Activated CD4-positive, alpha-beta memory T cell treated with anti-CD3 and anti-CD28 coated beads for 36 hours (primary cell): ENCODE measurements at regions of chr10 and their contacts with region 1.

Region 1: DNA sequence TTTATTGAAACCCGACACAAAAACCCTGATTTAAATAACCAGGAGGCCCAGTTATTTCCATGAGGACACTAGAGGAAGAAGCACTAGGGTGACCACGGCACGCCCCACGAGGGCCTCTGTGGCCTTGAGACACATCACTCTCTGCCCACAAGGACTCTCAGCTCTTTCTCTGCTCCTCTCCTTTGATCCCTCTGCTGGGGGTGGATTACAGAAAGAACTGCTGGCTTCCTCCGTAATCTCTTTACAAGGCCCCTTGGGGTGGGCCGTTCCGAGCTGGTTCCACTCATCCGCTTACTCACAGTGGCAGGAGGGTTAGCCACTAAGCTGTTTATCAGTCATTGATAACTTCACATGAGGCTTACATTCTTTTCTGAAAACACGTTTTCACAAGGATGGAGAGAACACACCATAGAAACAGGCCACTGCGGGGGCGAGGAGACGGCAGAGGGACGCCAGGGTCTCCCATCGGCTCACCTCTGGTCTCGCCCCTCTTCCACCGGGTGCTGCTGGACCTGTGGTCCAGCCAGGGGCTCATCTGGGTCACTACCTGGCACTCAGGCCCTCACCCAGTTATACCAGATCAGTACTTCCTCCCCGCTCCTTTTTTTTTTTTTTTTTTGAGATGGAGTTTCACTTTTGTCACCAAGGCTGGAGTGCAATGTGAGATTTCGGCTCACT is 17.6 kb upstream of the PFKFB3 start:
- DNase-seq: peak; percentile 39
- H3K4me3 Mint-ChIP-seq: no peak overlapping the region
- H3K27ac Mint-ChIP-seq: peak overlapping the region; percentile 60
- H3K4me1 Mint-ChIP-seq: peaks cover 37% of the 10 kb centered on the region
- H3K27me3 Mint-ChIP-seq: no peaks in the 10 kb centered on the region

Region 2: DNA sequence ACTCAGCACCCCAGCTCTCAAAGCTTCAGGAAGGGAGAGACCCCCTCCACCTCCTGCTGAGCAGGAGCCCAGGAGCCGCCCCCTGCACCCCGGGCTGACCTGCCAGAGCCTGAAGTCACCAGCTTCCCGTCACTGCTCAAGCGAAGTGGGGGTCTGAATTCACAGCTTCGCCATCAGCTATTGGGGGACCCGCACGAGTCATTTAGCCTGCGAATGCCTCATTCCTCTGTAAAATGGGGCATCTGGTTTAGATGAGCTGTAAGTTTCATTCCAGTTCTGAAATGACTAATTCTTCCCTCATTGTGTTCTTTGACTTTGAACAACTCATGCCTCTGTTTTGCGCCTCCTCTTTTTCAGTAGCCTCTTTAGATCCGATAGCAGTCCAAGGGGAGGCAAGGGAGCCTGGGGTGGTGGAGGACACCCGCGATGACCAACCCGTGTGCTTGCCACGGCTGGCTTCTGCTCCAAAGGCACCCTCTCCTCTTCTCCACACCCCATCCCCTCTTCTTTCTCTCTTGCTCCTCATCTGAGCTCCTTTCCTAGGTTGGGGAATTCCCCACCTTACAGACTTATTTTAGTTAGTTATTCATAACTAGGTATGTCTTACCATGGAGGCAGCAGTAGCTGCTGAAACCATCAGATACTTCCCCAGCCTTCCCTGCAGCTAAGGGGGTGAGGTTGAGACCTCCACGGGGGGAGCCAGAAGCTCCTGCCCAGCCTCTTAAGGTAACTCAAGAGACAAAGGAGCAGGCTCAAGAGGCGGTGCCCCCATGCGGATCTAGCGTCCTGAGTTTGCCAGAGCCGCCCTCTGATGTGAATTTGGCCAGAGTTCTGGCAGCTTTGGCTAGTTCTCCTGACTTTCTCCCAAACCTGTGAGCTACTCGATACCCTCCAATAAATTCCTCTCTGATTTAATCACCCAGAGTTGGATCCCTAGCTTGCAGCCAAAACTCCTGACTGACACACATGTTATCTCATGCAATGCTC is 48.7 kb before region 1 on chr10:
- CTCF ChIA-PET with region 1: no interaction called
- POLR2A ChIA-PET with region 1: no interaction called
- intact Hi-C with region 1: loop called (anchors 1 kb)
- DNase-seq: peak; percentile 88
- H3K4me3 Mint-ChIP-seq: peak overlapping the region; percentile 52
- H3K27ac Mint-ChIP-seq: peak overlapping the region; percentile 82
- H3K4me1 Mint-ChIP-seq: peaks cover 63% of the 10 kb centered on the region
- H3K27me3 Mint-ChIP-seq: peaks cover 10% of the 10 kb centered on the region

Region 3: DNA sequence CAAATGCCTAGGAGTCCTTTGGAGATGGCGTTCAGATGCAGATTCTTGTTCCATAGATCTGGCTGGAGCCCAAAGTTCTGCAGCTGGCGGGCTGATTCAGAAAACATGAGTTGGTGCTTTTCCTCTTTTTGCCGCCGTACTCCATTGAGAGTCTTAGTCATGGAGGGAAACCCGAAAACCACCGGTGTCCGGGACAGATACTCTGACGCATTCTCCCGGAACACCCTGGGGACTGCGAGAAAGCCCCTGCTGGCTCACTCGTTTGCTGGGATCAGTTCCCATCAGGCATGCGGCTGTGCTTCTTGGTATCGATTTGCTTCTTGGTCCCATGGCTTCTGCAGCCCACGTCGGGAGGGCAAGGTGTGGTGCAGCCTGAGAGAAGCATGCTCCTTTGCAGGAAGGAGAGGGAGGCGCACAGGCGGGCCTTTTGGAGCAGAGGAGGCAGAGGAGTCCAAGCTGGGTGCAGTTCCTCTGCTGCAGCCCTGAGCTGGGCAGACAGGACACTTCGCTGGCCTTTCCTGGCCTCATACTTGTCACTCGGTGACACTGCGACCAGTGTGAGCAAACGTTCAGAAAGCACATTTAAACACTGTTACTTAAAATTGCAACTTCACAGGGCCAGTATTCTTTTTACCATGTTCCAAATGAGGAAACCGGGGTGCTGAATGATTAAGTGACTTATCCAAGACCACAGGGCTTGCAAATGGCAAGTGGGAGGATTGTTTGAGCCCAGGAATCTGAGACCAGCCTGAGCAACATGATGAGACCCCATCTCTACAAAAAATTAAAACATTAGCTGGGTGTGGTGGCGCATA is 13.1 kb before region 1 on chr10:
- CTCF ChIA-PET with region 1: interaction called, 6 read pairs
- POLR2A ChIA-PET with region 1: interaction called, 4 read pairs
- intact Hi-C with region 1: loop called (anchors 2 kb)
- DNase-seq: peak; percentile 54
- H3K4me3 Mint-ChIP-seq: no peak overlapping the region
- H3K27ac Mint-ChIP-seq: peak overlapping the region; percentile 26
- H3K4me1 Mint-ChIP-seq: peaks cover 76% of the 10 kb centered on the region
- H3K27me3 Mint-ChIP-seq: no peaks in the 10 kb centered on the region

Region 4: DNA sequence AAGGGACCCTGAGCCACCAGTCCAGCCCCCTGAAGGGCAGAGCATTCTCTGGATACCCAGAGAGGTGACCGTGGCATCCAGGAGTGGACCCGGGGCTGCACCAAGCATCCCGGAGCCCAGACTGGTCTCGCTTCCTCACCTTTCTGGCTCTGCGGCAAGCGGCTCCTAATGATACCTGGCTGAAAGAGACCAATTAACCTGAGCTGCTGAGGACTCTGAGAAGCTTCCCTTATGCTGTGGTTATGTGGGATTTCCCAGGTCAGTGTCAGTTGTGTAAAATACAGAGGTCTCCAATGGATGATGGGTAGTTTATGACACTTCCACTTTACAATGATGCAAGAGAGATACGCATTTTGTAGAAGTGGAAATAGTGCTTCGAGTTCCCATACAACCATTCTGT is 69.0 kb after region 1 on chr10:
- CTCF ChIA-PET with region 1: no interaction called
- POLR2A ChIA-PET with region 1: no interaction called
- intact Hi-C with region 1: no loop called
- DNase-seq: no peak
- H3K4me3 Mint-ChIP-seq: no peak overlapping the region
- H3K27ac Mint-ChIP-seq: no peak overlapping the region
- H3K4me1 Mint-ChIP-seq: no peaks in the 10 kb centered on the region
- H3K27me3 Mint-ChIP-seq: no peaks in the 10 kb centered on the region